SK-N-SH (cell line): ENCODE measurements at regions of chr2 and their contacts with region 1.

Region 1: GRCh38 chr2:231563378-231563961 is 29.2 kb upstream of the TEX44 start:
- DNase-seq: peak; percentile 88
- H3K4me3 ChIP-seq: no peak overlapping the region; a peak in 1 of 4 replicates
- H3K27ac ChIP-seq: no peak overlapping the region
- H3K4me1 ChIP-seq: peaks cover 0 to 4% of the 10 kb centered on the region in 2 experiments; a peak in 1 of 4 replicates
- H3K27me3 ChIP-seq: no peaks in the 10 kb centered on the region
- CTCF ChIP-seq: peak; percentile 60
- EP300 ChIP-seq: no peak
- RAD21 ChIP-seq: peak; percentile 83

Region 2: DNA sequence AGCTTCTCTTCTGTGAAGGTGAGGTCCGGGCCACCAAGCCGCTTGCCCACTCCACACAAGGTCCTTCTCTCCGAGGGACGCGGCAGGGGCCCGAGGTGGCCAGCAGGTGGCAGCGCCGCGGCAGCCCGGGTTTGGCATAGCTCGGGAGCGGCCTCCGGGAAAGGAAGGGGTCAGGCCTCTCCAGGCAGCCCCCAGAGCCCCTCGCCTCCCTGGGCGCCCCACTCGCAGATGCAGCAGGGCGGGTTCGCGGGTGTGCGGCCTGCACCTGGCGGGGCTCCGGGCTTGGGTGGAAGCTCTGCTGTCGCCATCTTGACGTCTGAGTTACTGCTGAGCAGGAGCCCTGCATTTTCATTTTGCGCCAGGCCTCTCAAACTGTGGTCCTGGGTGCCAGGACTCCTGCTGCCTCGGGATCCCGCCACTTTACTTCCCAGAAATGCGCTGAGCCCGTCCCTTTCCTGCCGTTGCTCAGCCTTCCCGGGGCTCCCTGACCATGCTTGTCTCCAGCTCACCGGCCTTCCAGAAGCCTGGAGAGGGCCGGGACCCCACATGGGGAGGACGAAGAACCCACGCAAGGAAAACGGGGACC is 80.6 kb before region 1 on chr2:
- CTCF ChIA-PET with region 1: interaction called, 50 read pairs
- POLR2A ChIA-PET with region 1: no interaction called
- DNase-seq: peak; percentile 96
- H3K4me3 ChIP-seq: no peak overlapping the region; a peak in 1 of 4 replicates
- H3K27ac ChIP-seq: no peak overlapping the region
- H3K4me1 ChIP-seq: no peaks in the 10 kb centered on the region; a peak in 1 of 4 replicates
- H3K27me3 ChIP-seq: no peaks in the 10 kb centered on the region
- CTCF ChIP-seq: peak; percentile 72
- EP300 ChIP-seq: no peak
- RAD21 ChIP-seq: peak; percentile 62

Region 3: DNA sequence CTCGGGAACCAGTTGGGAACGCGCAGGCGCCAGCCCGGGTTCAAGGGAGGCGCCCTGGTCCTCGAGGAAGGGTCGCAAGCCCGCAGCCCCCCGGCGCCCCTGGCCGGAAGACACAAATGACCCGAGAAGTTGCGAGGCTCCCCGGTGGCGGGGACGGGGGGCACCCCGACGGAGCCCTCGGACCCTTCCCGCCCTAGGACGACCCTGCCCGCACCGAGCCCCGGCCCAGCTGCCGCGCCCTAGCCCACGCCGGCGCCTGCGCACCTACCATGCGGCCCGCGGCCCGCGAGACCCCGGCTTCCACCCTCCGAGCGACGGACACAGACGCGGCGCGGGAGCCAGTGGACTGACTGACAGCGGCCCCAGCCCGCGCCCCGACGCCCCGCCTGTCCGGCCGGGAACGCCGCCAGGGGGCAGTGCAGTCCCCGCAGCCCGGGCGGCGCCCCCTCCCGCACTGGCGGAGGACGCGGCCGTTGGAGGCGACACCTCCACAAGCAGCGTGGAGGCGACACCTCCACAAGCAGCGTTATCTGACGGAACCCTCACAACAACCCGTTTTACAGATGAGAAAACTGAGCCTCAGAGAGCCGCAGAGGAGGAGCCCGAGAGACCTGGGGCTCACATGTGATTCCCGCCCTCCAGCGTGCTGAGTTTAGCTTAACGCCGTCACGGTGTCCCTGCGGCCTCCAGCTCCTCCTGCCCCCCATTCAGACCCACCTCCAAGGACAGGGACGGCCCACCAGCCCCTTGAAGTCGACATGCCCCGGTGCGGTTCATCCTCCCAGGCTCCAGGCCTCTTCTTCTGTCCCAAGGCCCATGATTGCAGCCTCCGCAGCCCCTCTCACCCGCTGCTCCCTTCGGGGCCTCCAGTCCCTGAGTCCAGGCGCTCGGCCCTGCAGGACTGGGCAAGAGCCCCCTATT is 33.1 kb before region 1 on chr2 and contains the start of gene NMUR1:
- CTCF ChIA-PET with region 1: interaction called, 15 read pairs
- POLR2A ChIA-PET with region 1: no interaction called
- DNase-seq: peak; percentile 93
- H3K4me3 ChIP-seq: peak within 1 kb of the TSS; percentile 39 to 44; a peak in 3 of 4 replicates
- H3K27ac ChIP-seq: no peak within 1 kb of the TSS
- H3K4me1 ChIP-seq: no peaks in the 10 kb centered on the region; a peak in 1 of 4 replicates
- H3K27me3 ChIP-seq: peaks cover 11% of the 10 kb centered on the region; the same call in 1 of the 2 replicates
- CTCF ChIP-seq: peak; percentile 73
- EP300 ChIP-seq: no peak
- RAD21 ChIP-seq: peak; percentile 34; the same call in 1 of the 2 replicates
- polyA plus RNA-seq, gene NMUR1: not detected in 2 replicates

Region 4: GRCh38 chr2:231590619-231591018 is 27.1 kb after region 1 on chr2:
- CTCF ChIA-PET with region 1: interaction called, 13 read pairs
- POLR2A ChIA-PET with region 1: no interaction called
- DNase-seq: no peak
- H3K4me3 ChIP-seq: no peak overlapping the region
- H3K27ac ChIP-seq: no peak overlapping the region
- H3K4me1 ChIP-seq: peaks cover 0 to 5% of the 10 kb centered on the region in 2 experiments; a peak in 1 of 4 replicates
- H3K27me3 ChIP-seq: no peaks in the 10 kb centered on the region
- CTCF ChIP-seq: no peak
- EP300 ChIP-seq: no peak
- RAD21 ChIP-seq: no peak

Region 5: DNA sequence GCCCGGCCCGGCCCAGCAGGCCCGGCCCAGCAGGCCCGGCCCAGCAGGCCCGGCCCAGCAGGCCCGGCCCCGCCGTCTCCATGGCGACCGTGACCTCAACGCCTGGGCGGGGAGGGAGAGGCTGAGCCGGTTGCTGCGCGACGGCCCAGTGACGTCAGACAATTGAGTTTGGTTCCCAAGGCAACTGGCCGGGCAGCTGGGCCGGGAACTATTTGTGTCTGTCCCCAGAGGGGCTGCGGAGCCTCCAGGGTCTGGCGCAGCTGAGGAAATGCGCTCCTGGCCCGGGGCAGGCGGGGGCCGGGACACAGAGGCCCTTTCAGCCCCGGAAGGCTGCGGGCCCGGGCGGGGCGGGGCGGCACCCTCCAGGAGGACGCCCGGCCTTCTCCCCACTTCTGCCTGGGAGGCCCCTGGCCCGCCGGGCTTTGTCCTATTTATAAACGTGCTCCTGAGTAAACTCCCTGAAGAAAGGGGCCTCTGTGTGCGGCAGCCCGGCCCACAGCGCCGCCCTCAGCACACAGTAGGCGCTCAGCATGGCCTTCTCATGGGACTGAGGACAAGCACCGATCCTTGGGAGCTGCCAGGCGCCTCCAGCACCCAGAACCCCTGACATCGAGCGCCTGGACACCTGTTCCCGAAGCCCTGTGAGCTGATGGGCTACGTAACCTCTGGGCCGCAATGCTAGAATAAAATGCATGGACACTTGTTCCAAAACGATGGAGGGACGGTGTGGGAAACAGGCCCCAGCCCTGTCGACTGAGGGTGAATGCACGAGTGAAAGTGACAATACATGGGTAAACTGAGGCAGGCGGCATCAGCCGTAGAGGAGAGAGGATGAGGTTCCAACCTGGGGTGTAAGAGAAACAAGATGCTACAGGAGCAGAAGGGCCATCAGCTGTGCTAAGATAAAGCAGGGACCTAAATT is 41.5 kb after region 1 on chr2:
- CTCF ChIA-PET with region 1: interaction called, 152 read pairs
- POLR2A ChIA-PET with region 1: interaction called, 3 read pairs
- DNase-seq: peak; percentile 99
- H3K4me3 ChIP-seq: peak overlapping the region; percentile 51 to 66
- H3K27ac ChIP-seq: peak overlapping the region; percentile 96
- H3K4me1 ChIP-seq: peaks cover 10 to 28% of the 10 kb centered on the region in 2 experiments
- H3K27me3 ChIP-seq: no peaks in the 10 kb centered on the region
- CTCF ChIP-seq: no peak
- EP300 ChIP-seq: peak in 1 of 2 experiments; percentile 19; a peak in 1 of 4 replicates
- RAD21 ChIP-seq: no peak

Region 6: GRCh38 chr2:231612179-231613053 is 48.9 kb after region 1 on chr2:
- CTCF ChIA-PET with region 1: interaction called, 22 read pairs
- POLR2A ChIA-PET with region 1: no interaction called
- DNase-seq: peak; percentile 93
- H3K4me3 ChIP-seq: peak overlapping the region in 1 of 2 experiments; percentile 40; a peak in 1 of 4 replicates
- H3K27ac ChIP-seq: peak overlapping the region in 1 of 2 experiments; percentile 89; a peak in 3 of 4 replicates
- H3K4me1 ChIP-seq: peaks cover 24 to 26% of the 10 kb centered on the region in 2 experiments; a peak in 3 of 4 replicates
- H3K27me3 ChIP-seq: no peaks in the 10 kb centered on the region
- CTCF ChIP-seq: peak; percentile 97
- EP300 ChIP-seq: peak in 1 of 2 experiments; percentile 27; a peak in 1 of 4 replicates
- RAD21 ChIP-seq: peak; percentile 85